Activated CD4-positive, alpha-beta T cell treated with anti-CD3 and anti-CD28 coated beads, Interleukin-2, amount 10 ng/mL, durations not matched to agents 24 days and 14 days (primary cell): ENCODE measurements at regions of chr3 and their contacts with region 1.

Region 1: DNA sequence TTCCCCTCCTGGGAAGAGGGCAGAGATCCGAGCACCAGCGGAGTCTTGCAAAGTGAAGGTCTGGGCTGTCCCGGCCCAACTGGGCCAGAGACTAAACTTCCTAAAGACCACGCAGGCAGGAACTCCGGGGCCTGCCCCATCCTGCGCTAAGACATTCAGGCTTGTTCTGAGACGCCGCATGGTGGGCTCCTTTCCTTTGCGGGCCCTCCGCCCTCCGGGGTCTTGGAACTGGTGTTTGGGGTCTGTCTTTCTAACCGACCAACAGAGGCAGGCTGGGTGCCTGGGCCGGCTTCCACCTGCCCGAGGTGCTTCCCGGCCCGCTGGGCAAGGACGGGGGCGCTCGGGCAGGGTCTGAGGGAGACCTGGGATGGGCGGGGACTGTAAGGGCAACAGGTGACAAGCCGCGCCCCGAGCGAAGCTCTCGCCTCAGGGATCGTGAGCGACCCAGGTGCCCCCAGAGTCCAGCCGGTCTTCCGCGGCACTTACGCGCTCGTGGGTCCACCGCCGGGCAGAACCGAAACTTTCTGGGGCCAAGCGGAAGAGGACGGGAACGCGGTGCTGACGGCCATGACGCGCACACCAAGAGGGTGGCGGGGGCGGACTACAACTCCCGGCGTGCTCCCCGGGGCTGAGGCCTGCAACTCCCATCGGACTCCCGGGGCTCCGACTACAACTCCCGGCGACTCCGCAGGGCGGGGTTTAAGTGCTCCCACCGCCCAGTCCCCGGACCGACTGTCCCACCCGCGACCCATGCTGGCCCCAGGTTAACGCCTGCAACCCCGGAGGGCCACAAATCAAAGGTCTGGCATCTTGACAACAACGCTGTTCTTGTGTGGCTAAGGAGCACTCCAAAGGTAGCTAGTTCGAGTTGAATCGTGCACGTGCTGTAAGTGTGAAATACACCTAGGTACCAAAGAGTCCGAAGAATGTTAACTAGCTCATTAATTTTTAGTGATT is at the start of gene FYCO1:
- DNase-seq: peak; percentile 96
- H3K4me3 Mint-ChIP-seq: peak within 1 kb of the TSS; percentile 89
- H3K27ac Mint-ChIP-seq: peak within 1 kb of the TSS; percentile 96
- H3K4me1 Mint-ChIP-seq: peaks cover 50% of the 10 kb centered on the region
- H3K27me3 Mint-ChIP-seq: peaks cover 22% of the 10 kb centered on the region
- total RNA-seq, gene FYCO1: 16.5 and 16.8 TPM in 2 replicates

Region 2: GRCh38 chr3:45950686-45951600 is 44.6 kb before region 1 on chr3:
- intact Hi-C with region 1: loop called (anchors 2 kb)
- DNase-seq: peak; percentile 87
- H3K4me3 Mint-ChIP-seq: peak overlapping the region; percentile 45
- H3K27ac Mint-ChIP-seq: peak overlapping the region; percentile 87
- H3K4me1 Mint-ChIP-seq: peaks cover 75% of the 10 kb centered on the region
- H3K27me3 Mint-ChIP-seq: no peaks in the 10 kb centered on the region

Region 3: GRCh38 chr3:45964139-45964538 is 31.4 kb before region 1 on chr3:
- intact Hi-C with region 1: loop called (anchors 1 kb)
- DNase-seq: peak; percentile 80
- H3K4me3 Mint-ChIP-seq: peak overlapping the region; percentile 67
- H3K27ac Mint-ChIP-seq: peak overlapping the region; percentile 81
- H3K4me1 Mint-ChIP-seq: peaks cover 69% of the 10 kb centered on the region
- H3K27me3 Mint-ChIP-seq: no peaks in the 10 kb centered on the region

Region 4: GRCh38 chr3:45978006-45978761 is 17.3 kb before region 1 on chr3:
- intact Hi-C with region 1: loop called (anchors 1 kb)
- DNase-seq: peak; percentile 91
- H3K4me3 Mint-ChIP-seq: peak overlapping the region; percentile 80
- H3K27ac Mint-ChIP-seq: peak overlapping the region; percentile 95
- H3K4me1 Mint-ChIP-seq: peaks cover 84% of the 10 kb centered on the region
- H3K27me3 Mint-ChIP-seq: no peaks in the 10 kb centered on the region

Region 5: DNA sequence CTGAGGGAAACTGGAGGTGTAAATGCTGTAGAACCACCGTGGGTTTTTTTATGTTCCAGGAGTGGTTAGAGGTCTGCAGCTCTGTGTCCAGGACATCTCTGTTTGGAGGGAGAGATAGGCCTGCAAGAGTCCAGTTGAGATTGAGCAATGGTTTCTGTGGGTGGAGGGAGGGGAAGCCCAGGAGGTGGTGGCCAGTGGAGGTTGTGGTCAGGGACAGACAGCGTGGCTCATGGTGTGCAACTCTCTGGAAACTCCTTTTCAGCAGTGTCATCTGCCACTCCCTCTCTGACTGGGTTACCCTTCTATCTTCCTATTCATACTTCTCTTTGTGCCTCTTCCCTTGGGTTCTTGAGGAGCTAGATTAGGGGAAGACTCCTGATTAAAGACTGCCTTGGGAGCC is 22.2 kb after region 1 on chr3:
- intact Hi-C with region 1: loop called (anchors 2 kb)
- DNase-seq: no peak
- H3K4me3 Mint-ChIP-seq: peak overlapping the region; percentile 4
- H3K27ac Mint-ChIP-seq: peak overlapping the region; percentile 79
- H3K4me1 Mint-ChIP-seq: peaks cover 42% of the 10 kb centered on the region
- H3K27me3 Mint-ChIP-seq: peaks cover 10% of the 10 kb centered on the region

Region 6: DNA sequence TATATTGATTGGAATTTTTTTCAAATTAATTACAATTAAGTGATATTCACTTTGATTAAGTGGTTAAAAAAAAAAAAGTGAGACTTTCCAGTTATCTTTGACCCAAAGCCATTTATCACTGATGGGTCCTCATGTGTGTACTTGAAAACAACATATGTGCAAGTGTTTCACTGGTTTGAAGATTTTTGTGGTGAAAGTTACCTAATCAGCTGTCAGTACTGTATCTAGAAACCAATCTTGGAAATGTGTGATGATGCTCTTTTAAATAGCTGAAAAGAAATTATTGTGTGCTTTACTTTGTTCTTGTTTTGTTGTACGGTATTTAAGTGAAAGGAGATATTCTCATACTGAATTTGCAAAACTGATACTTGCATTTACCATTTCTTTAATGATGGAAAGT is 43.4 kb after region 1 on chr3:
- intact Hi-C with region 1: no loop called
- DNase-seq: peak; percentile 15
- H3K4me3 Mint-ChIP-seq: no peak overlapping the region
- H3K27ac Mint-ChIP-seq: no peak overlapping the region
- H3K4me1 Mint-ChIP-seq: no peaks in the 10 kb centered on the region
- H3K27me3 Mint-ChIP-seq: peaks cover 18% of the 10 kb centered on the region

Region 7: GRCh38 chr3:46065294-46065721 is 69.8 kb after region 1 on chr3:
- intact Hi-C with region 1: loop called (anchors 1 kb)
- DNase-seq: peak; percentile 93
- H3K4me3 Mint-ChIP-seq: peak overlapping the region; percentile 39
- H3K27ac Mint-ChIP-seq: peak overlapping the region; percentile 68
- H3K4me1 Mint-ChIP-seq: peaks cover 51% of the 10 kb centered on the region
- H3K27me3 Mint-ChIP-seq: peaks cover 53% of the 10 kb centered on the region

Region 8: GRCh38 chr3:46070595-46071093 is 75.1 kb after region 1 on chr3:
- intact Hi-C with region 1: loop called (anchors 1 kb)
- DNase-seq: no peak
- H3K4me3 Mint-ChIP-seq: peak overlapping the region; percentile 47
- H3K27ac Mint-ChIP-seq: peak overlapping the region; percentile 68
- H3K4me1 Mint-ChIP-seq: peaks cover 58% of the 10 kb centered on the region
- H3K27me3 Mint-ChIP-seq: peaks cover 39% of the 10 kb centered on the region

Region 9: GRCh38 chr3:46628901-46629369 is 633.4 kb after region 1 on chr3:
- intact Hi-C with region 1: no loop called
- DNase-seq: no peak
- H3K4me3 Mint-ChIP-seq: peak overlapping the region; percentile 66
- H3K27ac Mint-ChIP-seq: peak overlapping the region; percentile 46
- H3K4me1 Mint-ChIP-seq: peaks cover 12% of the 10 kb centered on the region
- H3K27me3 Mint-ChIP-seq: peaks cover 5% of the 10 kb centered on the region